ENCODE measurements at regions of chr7 and their contacts with region 1.

Region 1: GRCh38 chr7:17625043-17625442 is 315.3 kb downstream of the SNX13 start:
- DNase-seq: no peak
- H3K4me3 ChIP-seq: no peak overlapping the region
- H3K4me3 Mint-ChIP-seq: no peak overlapping the region
- H3K27ac Mint-ChIP-seq: no peak overlapping the region
- H3K4me1 ChIP-seq: peaks cover 13% of the 10 kb centered on the region
- H3K4me1 Mint-ChIP-seq: peaks cover 18% of the 10 kb centered on the region
- H3K27me3 ChIP-seq: no peaks in the 10 kb centered on the region
- H3K27me3 Mint-ChIP-seq: no peaks in the 10 kb centered on the region
- CTCF ChIP-seq: no peak

Region 2: DNA sequence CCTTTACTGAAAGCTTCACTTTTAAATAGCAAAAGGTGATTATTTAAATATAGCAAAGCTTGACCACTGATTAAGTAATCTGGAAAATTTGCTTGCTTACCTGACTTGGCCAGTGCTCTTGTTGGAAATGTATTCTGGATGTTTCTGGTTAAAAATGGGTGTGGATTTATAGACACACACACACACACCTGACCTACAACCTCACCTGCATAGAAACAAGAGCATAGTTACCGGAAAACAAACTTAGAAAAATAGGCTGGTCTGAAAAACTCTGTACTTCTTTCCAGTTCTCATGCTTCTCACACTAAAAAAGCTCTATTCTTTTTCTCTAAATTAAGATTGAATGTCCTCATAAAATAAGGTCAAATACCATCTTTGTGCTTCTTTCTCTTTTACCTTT is 743.2 kb before region 1 on chr7 and contains the start of gene AGR3:
- CTCF ChIA-PET with region 1: no interaction called
- POLR2A ChIA-PET with region 1: no interaction called
- intact Hi-C with region 1: no loop called
- DNase-seq: peak in 1 of 2 experiments; percentile 45
- H3K4me3 ChIP-seq: peak within 1 kb of the TSS; percentile 12; the same call in 1 of the 2 replicates
- H3K4me3 Mint-ChIP-seq: no peak within 1 kb of the TSS
- H3K27ac Mint-ChIP-seq: peak within 1 kb of the TSS; percentile 50
- H3K4me1 ChIP-seq: 0 out of 2 replicates have a peak, but pooled peaks cover 5% of the 10 kb centered on the region
- H3K4me1 Mint-ChIP-seq: no peaks in the 10 kb centered on the region
- H3K27me3 ChIP-seq: no peaks in the 10 kb centered on the region
- H3K27me3 Mint-ChIP-seq: no peaks in the 10 kb centered on the region
- CTCF ChIP-seq: no peak
- total RNA-seq, gene AGR3: 1.2 and 3.1 TPM in 2 replicates

Region 3: DNA sequence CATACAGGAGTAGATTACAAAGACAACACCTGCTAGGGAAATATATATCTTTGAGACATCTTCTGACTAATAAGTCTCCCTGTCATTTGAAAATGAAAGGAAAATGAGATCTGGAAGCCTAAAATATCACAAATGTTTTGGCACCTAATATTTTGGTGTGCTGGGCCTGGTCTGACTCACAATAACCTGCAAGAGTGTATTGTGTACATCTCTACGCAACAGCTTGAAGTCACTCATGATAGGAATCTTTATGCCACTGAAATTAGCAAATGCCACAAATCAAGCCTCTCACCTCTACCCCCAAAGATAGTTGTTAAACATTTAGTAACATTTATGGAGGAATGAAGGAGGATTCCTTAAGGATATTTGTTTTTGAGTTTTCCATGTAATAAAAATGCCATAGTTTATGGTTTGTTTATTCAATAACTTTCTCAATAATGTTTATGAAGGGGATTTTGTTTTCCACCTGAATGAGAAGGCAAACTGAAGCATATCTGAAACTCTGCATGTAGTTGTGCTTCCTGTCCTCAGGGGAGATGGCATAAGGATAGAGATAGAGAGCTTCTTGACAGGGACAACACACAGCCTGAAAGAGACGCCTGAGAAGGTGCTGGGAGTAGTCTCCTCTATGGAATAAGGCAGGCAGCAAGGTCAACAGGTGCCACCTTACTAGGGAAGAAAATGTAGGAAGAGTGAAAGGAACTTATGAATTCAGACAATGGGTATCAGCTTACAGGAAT is 129.2 kb before region 1 on chr7:
- CTCF ChIA-PET with region 1: no interaction called
- POLR2A ChIA-PET with region 1: interaction called, 10 read pairs
- intact Hi-C with region 1: no loop called
- DNase-seq: peak in 1 of 2 experiments; percentile 26
- H3K4me3 ChIP-seq: no peak overlapping the region
- H3K4me3 Mint-ChIP-seq: no peak overlapping the region
- H3K27ac Mint-ChIP-seq: peak overlapping the region; percentile 22
- H3K4me1 ChIP-seq: peaks cover 24% of the 10 kb centered on the region
- H3K4me1 Mint-ChIP-seq: peaks cover 11% of the 10 kb centered on the region
- H3K27me3 ChIP-seq: no peaks in the 10 kb centered on the region
- H3K27me3 Mint-ChIP-seq: no peaks in the 10 kb centered on the region
- CTCF ChIP-seq: peak in 1 of 2 experiments; percentile 0

Region 4: DNA sequence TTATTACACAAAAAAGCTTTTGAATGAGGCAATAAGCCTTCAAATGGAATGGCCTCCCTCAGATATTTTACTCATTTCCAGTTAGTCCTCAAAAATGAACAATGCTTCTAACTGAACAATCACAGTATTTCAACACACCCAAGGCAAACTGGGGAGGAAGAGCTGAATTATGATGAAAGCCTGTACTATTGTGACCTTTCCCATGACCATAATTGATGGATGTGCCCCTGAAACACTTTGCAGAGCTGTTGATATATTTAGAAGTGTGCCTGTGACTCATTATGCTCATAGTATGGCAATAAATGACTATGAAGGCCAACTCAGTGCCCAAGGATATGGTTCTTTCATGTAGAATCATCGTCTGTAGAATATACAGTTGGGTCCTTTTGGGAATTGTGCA is 78.4 kb before region 1 on chr7:
- CTCF ChIA-PET with region 1: no interaction called
- POLR2A ChIA-PET with region 1: no interaction called
- intact Hi-C with region 1: no loop called
- DNase-seq: no peak
- H3K4me3 ChIP-seq: no peak overlapping the region
- H3K4me3 Mint-ChIP-seq: no peak overlapping the region
- H3K27ac Mint-ChIP-seq: no peak overlapping the region
- H3K4me1 ChIP-seq: peaks cover 11% of the 10 kb centered on the region; the same call in 1 of the 2 replicates
- H3K4me1 Mint-ChIP-seq: peaks cover 19% of the 10 kb centered on the region
- H3K27me3 ChIP-seq: no peaks in the 10 kb centered on the region
- H3K27me3 Mint-ChIP-seq: no peaks in the 10 kb centered on the region
- CTCF ChIP-seq: no peak

Region 5: DNA sequence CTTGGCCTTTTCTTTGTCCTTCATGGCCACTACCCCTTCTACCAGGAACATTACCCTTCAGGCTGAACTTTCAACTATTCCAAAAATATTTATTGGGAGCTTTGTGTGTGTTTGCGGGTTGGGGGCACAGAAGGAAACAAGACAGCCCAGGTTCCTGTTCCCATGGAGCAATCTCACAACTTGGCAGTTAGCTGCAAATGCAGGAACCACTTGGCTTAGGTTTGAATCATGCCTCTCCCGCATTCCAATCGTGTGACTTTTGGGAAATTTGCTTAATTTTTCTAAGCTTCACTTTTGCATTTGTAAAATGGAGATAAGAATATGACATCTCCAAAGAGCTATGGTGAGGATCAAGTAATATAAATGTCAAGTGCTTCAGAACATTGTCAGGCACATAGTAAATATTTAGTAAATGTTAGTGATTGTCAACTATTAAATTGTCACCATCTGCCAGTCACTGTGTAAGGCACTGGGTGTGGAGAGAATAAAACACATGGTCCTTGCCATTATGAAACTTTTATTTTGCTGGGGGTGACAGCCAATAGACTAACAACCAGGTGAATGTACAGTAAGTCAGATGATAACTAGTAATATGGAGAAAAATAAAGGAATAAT is 38.1 kb after region 1 on chr7:
- CTCF ChIA-PET with region 1: no interaction called
- POLR2A ChIA-PET with region 1: no interaction called
- intact Hi-C with region 1: no loop called
- DNase-seq: no peak
- H3K4me3 ChIP-seq: no peak overlapping the region
- H3K4me3 Mint-ChIP-seq: no peak overlapping the region
- H3K27ac Mint-ChIP-seq: no peak overlapping the region
- H3K4me1 ChIP-seq: no peaks in the 10 kb centered on the region
- H3K4me1 Mint-ChIP-seq: no peaks in the 10 kb centered on the region
- H3K27me3 ChIP-seq: no peaks in the 10 kb centered on the region
- H3K27me3 Mint-ChIP-seq: no peaks in the 10 kb centered on the region
- CTCF ChIP-seq: no peak

Region 6: DNA sequence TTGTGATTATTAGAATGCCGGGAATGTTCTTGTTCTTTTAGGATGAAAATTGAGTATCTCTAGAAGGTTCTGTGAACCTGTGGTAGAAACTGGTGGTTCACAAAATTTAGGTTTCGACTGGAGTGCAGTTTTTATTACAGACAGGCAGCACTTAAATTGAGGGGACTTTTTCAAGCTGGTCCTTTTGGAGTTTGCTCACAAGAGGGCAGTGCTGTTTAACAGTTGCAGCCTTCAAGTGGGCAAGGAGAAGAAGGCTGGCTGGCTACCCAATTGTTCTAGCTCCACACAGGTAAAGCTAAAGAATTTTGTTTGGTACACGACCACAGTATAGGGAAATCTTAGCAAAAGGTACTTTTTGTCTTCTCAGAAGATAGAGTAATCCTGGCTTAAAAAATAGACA is 81.7 kb after region 1 on chr7:
- CTCF ChIA-PET with region 1: no interaction called
- POLR2A ChIA-PET with region 1: no interaction called
- intact Hi-C with region 1: no loop called
- DNase-seq: peak; percentile 63 to 68
- H3K4me3 ChIP-seq: no peak overlapping the region
- H3K4me3 Mint-ChIP-seq: no peak overlapping the region
- H3K27ac Mint-ChIP-seq: no peak overlapping the region
- H3K4me1 ChIP-seq: no peaks in the 10 kb centered on the region
- H3K4me1 Mint-ChIP-seq: no peaks in the 10 kb centered on the region
- H3K27me3 ChIP-seq: peaks cover 1% of the 10 kb centered on the region; the same call in 1 of the 2 replicates
- H3K27me3 Mint-ChIP-seq: peaks cover 5% of the 10 kb centered on the region
- CTCF ChIP-seq: peak; percentile 78 to 80